Dendritic cell treated with granulocyte-macrophage colony-stimulating factor and Interleukin-4, amounts not matched to agents 40 ng/mL and 50 ng/mL, for 4 days (primary cell): ENCODE measurements at regions of chr4 and their contacts with region 1.

Region 1: DNA sequence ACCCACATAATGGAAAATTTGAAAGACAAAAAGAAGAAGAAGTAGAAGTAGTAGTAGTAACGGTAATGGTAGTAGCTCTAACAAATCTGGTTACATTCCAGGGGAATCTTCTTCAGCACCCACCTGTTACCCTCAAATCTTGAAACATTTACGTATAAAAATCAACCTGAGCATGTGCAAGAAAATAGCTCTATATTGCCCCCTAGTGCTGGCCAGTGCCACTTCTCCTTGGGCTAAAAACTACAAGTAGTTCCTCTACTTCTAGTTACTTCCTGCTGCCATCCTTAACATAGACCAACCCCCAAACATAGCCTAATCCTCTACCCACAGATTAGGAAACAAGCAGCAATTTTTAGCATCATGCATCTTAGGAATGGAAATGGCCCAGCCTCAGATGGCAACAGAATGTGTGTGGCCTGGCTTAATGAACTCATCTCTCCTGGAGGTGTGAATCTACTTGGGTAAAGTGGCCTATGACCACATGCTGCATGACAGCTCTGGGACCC is 3.1 kb downstream of the PDGFC start:
- H3K4me3 Mint-ChIP-seq: peak overlapping the region; percentile 79
- H3K27ac Mint-ChIP-seq: peak overlapping the region; percentile 96
- H3K4me1 Mint-ChIP-seq: peaks cover 60% of the 10 kb centered on the region
- H3K27me3 Mint-ChIP-seq: no peaks in the 10 kb centered on the region

Region 2: GRCh38 chr4:156475322-156475721 is 493.2 kb before region 1 on chr4:
- intact Hi-C with region 1: loop called (anchors 5 kb)
- H3K4me3 Mint-ChIP-seq: no peak overlapping the region
- H3K27ac Mint-ChIP-seq: no peak overlapping the region
- H3K4me1 Mint-ChIP-seq: no peaks in the 10 kb centered on the region
- H3K27me3 Mint-ChIP-seq: no peaks in the 10 kb centered on the region

Region 3: GRCh38 chr4:156805696-156806095 is 162.8 kb before region 1 on chr4:
- intact Hi-C with region 1: no loop called
- H3K4me3 Mint-ChIP-seq: no peak overlapping the region
- H3K27ac Mint-ChIP-seq: no peak overlapping the region
- H3K4me1 Mint-ChIP-seq: peaks cover 16% of the 10 kb centered on the region
- H3K27me3 Mint-ChIP-seq: no peaks in the 10 kb centered on the region

Region 4: GRCh38 chr4:156898373-156899117 is 70.0 kb before region 1 on chr4:
- intact Hi-C with region 1: loop called (anchors 5 kb)
- H3K4me3 Mint-ChIP-seq: peak overlapping the region; percentile 57
- H3K27ac Mint-ChIP-seq: peak overlapping the region; percentile 59
- H3K4me1 Mint-ChIP-seq: peaks cover 45% of the 10 kb centered on the region
- H3K27me3 Mint-ChIP-seq: no peaks in the 10 kb centered on the region

Region 5: GRCh38 chr4:156939801-156940200 is 28.7 kb before region 1 on chr4:
- intact Hi-C with region 1: loop called (anchors 5 kb)
- H3K4me3 Mint-ChIP-seq: no peak overlapping the region
- H3K27ac Mint-ChIP-seq: peak overlapping the region; percentile 84
- H3K4me1 Mint-ChIP-seq: peaks cover 27% of the 10 kb centered on the region
- H3K27me3 Mint-ChIP-seq: no peaks in the 10 kb centered on the region

Region 6: DNA sequence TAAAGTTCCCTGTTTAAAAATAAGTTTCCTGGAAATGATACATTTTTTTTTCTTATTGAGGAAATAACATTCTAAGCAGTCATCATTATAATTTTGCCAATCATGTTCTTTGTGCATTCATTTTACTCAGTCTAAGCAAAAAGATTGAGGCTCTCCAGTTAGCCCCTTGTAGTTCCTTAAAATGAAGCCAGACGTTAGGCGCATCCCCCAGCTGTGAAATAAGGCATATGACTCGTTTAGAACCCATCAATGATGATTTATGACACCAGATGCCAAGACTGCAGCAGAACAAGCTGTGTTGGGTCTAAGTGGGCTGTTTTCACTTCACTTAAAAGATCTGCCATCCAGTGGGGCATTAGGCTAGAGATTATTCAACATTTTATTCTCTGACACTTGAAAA is 13.9 kb before region 1 on chr4:
- intact Hi-C with region 1: loop called (anchors 1 kb)
- H3K4me3 Mint-ChIP-seq: peak overlapping the region; percentile 21
- H3K27ac Mint-ChIP-seq: peak overlapping the region; percentile 93
- H3K4me1 Mint-ChIP-seq: peaks cover 65% of the 10 kb centered on the region
- H3K27me3 Mint-ChIP-seq: no peaks in the 10 kb centered on the region

Region 7: GRCh38 chr4:157045507-157046127 is 77.1 kb after region 1 on chr4:
- intact Hi-C with region 1: loop called (anchors 5 kb)
- H3K4me3 Mint-ChIP-seq: no peak overlapping the region
- H3K27ac Mint-ChIP-seq: no peak overlapping the region
- H3K4me1 Mint-ChIP-seq: no peaks in the 10 kb centered on the region
- H3K27me3 Mint-ChIP-seq: no peaks in the 10 kb centered on the region